ENCODE measurements at regions of chr2 and their contacts with region 1.

Region 1: DNA sequence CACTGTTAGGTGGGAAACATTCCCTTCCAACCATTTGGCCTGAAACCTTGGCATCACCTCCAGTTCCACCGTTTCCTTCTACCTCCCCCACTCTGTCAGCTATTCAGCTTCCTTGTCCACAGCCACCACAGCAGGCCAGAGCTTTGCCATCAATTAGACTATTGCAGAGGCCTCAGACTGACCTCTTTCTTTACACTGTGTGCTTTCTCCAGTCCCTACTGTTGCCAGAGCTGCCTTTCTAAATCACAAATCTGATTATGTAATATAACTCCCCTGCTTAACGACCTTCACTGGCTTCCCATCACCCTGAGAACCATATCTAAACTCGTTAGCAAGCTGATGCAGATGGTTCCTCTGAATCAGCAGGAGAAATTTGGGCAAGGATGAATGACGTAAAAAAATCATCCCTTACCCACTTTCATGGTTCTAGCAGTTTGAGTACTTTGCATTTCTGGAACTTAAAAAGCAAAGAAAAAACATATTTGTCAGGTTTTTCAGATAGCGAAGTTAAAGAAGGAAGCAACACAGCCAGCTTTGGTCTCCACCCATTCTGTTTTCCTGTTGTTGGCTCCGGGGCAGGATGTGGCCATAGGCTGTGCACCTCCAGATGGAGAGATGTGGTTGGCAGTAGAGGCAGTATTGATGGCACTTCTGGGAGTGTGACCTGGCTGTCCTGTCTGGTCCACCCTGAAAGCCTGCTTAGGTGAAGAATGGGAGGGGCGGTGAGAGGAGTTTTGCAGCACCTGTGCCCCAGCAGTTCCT is 422.1 kb downstream of the PARD3B start:
- DNase-seq: peak; percentile 83
- H3K4me3 Mint-ChIP-seq: peak overlapping the region; percentile 51
- H3K27ac Mint-ChIP-seq: peak overlapping the region; percentile 96
- H3K4me1 Mint-ChIP-seq: peaks cover 54% of the 10 kb centered on the region
- H3K27me3 Mint-ChIP-seq: no peaks in the 10 kb centered on the region

Region 2: GRCh38 chr2:204881655-204882054 is 85.7 kb before region 1 on chr2:
- CTCF ChIA-PET with region 1: interaction called, 8 read pairs
- POLR2A ChIA-PET with region 1: interaction called, 18 read pairs
- DNase-seq: peak; percentile 55
- H3K4me3 Mint-ChIP-seq: peak overlapping the region; percentile 42
- H3K27ac Mint-ChIP-seq: peak overlapping the region; percentile 83
- H3K4me1 Mint-ChIP-seq: peaks cover 52% of the 10 kb centered on the region
- H3K27me3 Mint-ChIP-seq: no peaks in the 10 kb centered on the region

Region 3: DNA sequence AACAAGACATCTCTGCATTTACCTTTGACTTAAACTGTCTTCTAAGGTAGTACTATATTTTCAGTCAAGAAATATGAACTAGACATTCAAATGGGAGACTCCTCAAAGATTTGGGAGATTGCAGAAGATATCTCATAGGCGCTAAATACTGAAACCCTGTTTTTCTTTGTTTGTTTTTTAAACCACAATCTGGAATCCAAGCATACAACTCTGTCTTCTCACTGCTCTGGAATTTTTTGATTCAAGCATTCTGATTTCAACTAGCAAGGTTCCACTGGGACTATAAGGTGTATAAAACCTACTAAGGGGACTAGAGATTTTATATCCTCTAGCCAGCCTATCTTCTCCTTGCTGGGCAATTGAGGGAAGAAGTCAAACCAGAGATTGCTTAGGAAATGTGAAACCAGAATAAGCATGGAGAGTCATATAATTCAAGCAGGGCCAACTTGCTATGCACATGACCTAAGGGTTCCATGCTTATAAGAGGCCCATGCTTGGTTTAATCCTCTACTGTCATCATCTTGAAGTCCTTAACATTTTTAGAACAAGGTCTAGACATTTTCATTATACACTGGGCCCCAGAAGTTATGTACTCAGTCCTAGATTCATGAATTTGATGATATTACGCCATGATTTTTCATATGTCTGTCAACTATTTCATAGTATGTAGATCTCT is 16.6 kb before region 1 on chr2:
- CTCF ChIA-PET with region 1: interaction called, 3 read pairs
- POLR2A ChIA-PET with region 1: interaction called, 16 read pairs
- DNase-seq: no peak
- H3K4me3 Mint-ChIP-seq: no peak overlapping the region
- H3K27ac Mint-ChIP-seq: no peak overlapping the region
- H3K4me1 Mint-ChIP-seq: peaks cover 43% of the 10 kb centered on the region
- H3K27me3 Mint-ChIP-seq: no peaks in the 10 kb centered on the region

Region 4: GRCh38 chr2:205427112-205427511 is 459.7 kb after region 1 on chr2:
- CTCF ChIA-PET with region 1: no interaction called
- POLR2A ChIA-PET with region 1: no interaction called
- DNase-seq: no peak
- H3K4me3 Mint-ChIP-seq: no peak overlapping the region
- H3K27ac Mint-ChIP-seq: no peak overlapping the region
- H3K4me1 Mint-ChIP-seq: no peaks in the 10 kb centered on the region
- H3K27me3 Mint-ChIP-seq: no peaks in the 10 kb centered on the region

Measured in activated CD4-positive, alpha-beta memory T cell treated with anti-CD3 and anti-CD28 coated beads, Interleukin-2, amount 10 ng/mL, durations not matched to agents 7 days and 5 days (primary cell).